ENCODE measurements at regions of chr12 and their contacts with region 1.

Region 1: DNA sequence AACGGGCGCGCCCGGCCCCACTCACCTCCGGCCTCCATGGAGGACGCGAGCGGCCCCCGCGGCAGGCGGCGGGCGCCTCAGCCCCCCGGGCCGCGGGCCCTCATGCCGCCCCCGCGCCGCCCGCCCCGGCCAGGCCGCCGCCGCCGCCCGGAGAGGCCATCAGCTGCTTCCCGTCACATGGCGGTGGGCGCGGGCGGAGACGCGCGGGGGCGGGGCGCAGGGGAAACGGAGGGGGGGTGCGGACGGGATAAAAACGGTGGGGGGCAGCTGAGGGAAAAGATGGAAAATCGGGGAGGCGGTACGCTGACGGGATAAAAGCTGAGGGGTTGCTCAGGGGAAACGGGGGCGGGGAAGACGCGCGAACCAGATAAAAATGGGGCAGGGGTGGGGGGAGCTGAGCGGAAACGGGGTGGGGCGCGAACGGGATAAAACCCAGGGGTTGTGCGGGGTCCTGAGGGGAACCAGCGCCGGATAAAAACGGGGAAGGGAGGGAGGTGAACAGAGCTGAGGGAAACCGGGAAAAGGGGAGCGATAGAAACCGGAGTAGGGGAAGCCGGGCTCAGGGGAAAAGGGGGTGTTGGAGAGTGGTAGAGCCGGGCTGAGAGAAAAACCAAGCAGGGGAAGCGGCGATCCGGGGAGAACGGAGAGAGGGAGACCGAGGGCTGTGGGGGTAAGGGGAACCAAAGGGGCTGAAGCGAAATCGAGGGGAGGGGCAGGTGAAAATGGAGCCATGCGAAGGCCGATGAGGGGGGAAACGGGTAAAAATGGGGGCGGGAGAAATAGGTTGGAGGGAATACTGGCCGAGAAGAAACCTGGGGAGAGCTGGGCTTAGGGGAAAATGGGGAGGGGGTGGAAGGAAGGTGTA is at the start of gene WSB2:
- DNase-seq: peak; percentile 32
- H3K4me3 Mint-ChIP-seq: peak within 1 kb of the TSS; percentile 99
- H3K27ac Mint-ChIP-seq: peak within 1 kb of the TSS; percentile 99
- H3K4me1 Mint-ChIP-seq: peaks cover 50% of the 10 kb centered on the region
- H3K27me3 Mint-ChIP-seq: no peaks in the 10 kb centered on the region
- total RNA-seq, gene WSB2: 84.2 and 89.3 TPM in 2 replicates

Region 2: GRCh38 chr12:118016424-118017264 is 44.6 kb before region 1 on chr12 and contains the start of gene RFC5:
- intact Hi-C with region 1: loop called (anchors 1 kb)
- DNase-seq: peak; percentile 95
- H3K4me3 Mint-ChIP-seq: peak within 1 kb of the TSS; percentile 88
- H3K27ac Mint-ChIP-seq: peak within 1 kb of the TSS; percentile 88
- H3K4me1 Mint-ChIP-seq: peaks cover 16% of the 10 kb centered on the region
- H3K27me3 Mint-ChIP-seq: peaks cover 2% of the 10 kb centered on the region
- total RNA-seq, gene RFC5: 61.9 and 65.8 TPM in 2 replicates

Region 3: DNA sequence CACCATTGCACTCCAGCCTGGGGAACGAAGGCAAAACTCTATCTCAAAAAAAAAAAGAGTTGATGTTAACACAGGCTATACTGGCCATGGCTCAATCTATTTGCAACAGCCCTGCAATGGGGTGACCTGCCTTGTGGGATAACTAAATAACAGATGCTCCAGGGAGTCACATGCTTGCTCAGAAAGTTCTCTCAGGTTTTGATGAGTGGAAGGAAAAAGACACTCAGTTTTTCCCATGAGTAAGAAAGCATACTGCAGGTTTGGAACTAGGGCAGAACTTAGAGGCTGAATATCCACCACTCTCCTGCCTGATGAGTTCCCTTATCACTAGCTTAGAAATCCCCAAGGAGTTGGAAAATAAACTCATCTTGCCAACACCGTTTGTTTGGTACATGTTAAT is 17.2 kb before region 1 on chr12:
- intact Hi-C with region 1: loop called (anchors 2 kb)
- DNase-seq: no peak
- H3K4me3 Mint-ChIP-seq: peak overlapping the region; percentile 35
- H3K27ac Mint-ChIP-seq: peak overlapping the region; percentile 92
- H3K4me1 Mint-ChIP-seq: peaks cover 38% of the 10 kb centered on the region
- H3K27me3 Mint-ChIP-seq: no peaks in the 10 kb centered on the region

Region 4: GRCh38 chr12:118135788-118136558 is 74.7 kb after region 1 on chr12 and contains the start of gene PEBP1:
- intact Hi-C with region 1: loop called (anchors 5 kb)
- DNase-seq: peak; percentile 90
- H3K4me3 Mint-ChIP-seq: peak within 1 kb of the TSS; percentile 99
- H3K27ac Mint-ChIP-seq: peak within 1 kb of the TSS; percentile 89
- H3K4me1 Mint-ChIP-seq: peaks cover 25% of the 10 kb centered on the region
- H3K27me3 Mint-ChIP-seq: no peaks in the 10 kb centered on the region
- total RNA-seq, gene PEBP1: 177 and 184 TPM in 2 replicates